Common myeloid progenitor, CD34-positive (primary cell): ENCODE measurements at regions of chr5 and their contacts with region 1.

Region 1: GRCh38 chr5:141951332-141951781 is 6.6 kb downstream of the PCDH12 start:
- DNase-seq: peak in 2 of 3 donors; percentile 38 to 58
- H3K4me3 ChIP-seq: no peak overlapping the region
- H3K27ac ChIP-seq: no peak overlapping the region
- H3K4me1 ChIP-seq: peaks cover 5 to 29% (median 22%) of the 10 kb centered on the region in 4 experiments
- H3K27me3 ChIP-seq: no peaks in the 10 kb centered on the region

Region 2: GRCh38 chr5:141940695-141941271 is 10.6 kb before region 1 on chr5:
- CTCF ChIA-PET with region 1: interaction called, 154 read pairs
- POLR2A ChIA-PET with region 1: no interaction called
- DNase-seq: peak in 2 of 3 donors; percentile 15 to 28
- H3K4me3 ChIP-seq: no peak overlapping the region
- H3K27ac ChIP-seq: no peak overlapping the region
- H3K4me1 ChIP-seq: peaks cover 0 to 19% (median 14%) of the 10 kb centered on the region in 4 experiments
- H3K27me3 ChIP-seq: no peaks in the 10 kb centered on the region